ENCODE measurements at regions of chr2 and their contacts with region 1.

Region 1: GRCh38 chr2:58448065-58448507 is 207.0 kb upstream of the FANCL start:
- DNase-seq: peak; percentile 50
- H3K4me3 ChIP-seq: no peak overlapping the region
- H3K27ac ChIP-seq: no peak overlapping the region
- H3K4me1 ChIP-seq: no peaks in the 10 kb centered on the region
- CTCF ChIP-seq: peak; percentile 75

Region 2: GRCh38 chr2:57759822-57760300 is 688.2 kb before region 1 on chr2:
- CTCF ChIA-PET with region 1: no interaction called
- POLR2A ChIA-PET with region 1: no interaction called
- intact Hi-C with region 1: loop called (anchors 10 kb)
- DNase-seq: peak; percentile 67
- H3K4me3 ChIP-seq: peak overlapping the region; percentile 32
- H3K27ac ChIP-seq: no peak overlapping the region
- H3K4me1 ChIP-seq: peaks cover 5% of the 10 kb centered on the region
- CTCF ChIP-seq: peak; percentile 91

Region 3: GRCh38 chr2:57906152-57906732 is 541.8 kb before region 1 on chr2:
- CTCF ChIA-PET with region 1: no interaction called
- POLR2A ChIA-PET with region 1: no interaction called
- intact Hi-C with region 1: loop called (anchors 5 kb)
- DNase-seq: peak; percentile 30
- H3K4me3 ChIP-seq: no peak overlapping the region
- H3K27ac ChIP-seq: no peak overlapping the region
- H3K4me1 ChIP-seq: no peaks in the 10 kb centered on the region
- CTCF ChIP-seq: peak; percentile 84

Region 4: GRCh38 chr2:58131191-58132011 is 316.7 kb before region 1 on chr2:
- CTCF ChIA-PET with region 1: no interaction called
- POLR2A ChIA-PET with region 1: no interaction called
- intact Hi-C with region 1: loop called (anchors 5 kb)
- DNase-seq: peak; percentile 4
- H3K4me3 ChIP-seq: no peak overlapping the region
- H3K27ac ChIP-seq: no peak overlapping the region
- H3K4me1 ChIP-seq: no peaks in the 10 kb centered on the region
- CTCF ChIP-seq: peak; percentile 67

Measured in OCI-LY7 (cell line).